ENCODE measurements at regions of chr1 and their contacts with region 1.

Region 1: DNA sequence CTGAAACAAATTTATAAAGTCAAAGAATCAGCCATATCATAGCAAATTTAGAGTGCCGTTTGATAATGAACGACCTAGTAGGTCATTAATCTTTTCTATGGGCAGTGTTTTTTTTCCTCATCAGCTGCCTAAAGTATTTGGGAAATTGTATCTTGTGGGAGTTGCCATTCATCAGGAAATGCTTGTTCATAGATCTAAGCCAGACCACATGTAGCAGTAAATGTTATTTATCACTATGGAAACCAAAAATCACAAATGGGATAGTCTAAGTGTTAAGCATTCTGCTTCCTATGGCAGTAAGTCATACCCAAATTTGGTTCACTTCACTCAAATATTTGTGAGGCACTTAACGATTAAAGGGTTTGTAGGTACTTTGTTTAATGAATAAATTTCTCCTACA is 52.9 kb downstream of the LRRC8D start:
- DNase-seq: no peak
- ATAC-seq: no peak
- H3K4me3 ChIP-seq: no peak overlapping the region
- H3K27ac ChIP-seq: peak overlapping the region in 3 of 4 donors; percentile 70 to 84 (median 83)
- H3K4me1 ChIP-seq: peaks cover 46 to 61% of the 10 kb centered on the region in 2 donors
- H3K27me3 ChIP-seq: no peaks in the 10 kb centered on the region
- CTCF ChIP-seq: no peak
- POLR2A ChIP-seq: no peak

Region 2: DNA sequence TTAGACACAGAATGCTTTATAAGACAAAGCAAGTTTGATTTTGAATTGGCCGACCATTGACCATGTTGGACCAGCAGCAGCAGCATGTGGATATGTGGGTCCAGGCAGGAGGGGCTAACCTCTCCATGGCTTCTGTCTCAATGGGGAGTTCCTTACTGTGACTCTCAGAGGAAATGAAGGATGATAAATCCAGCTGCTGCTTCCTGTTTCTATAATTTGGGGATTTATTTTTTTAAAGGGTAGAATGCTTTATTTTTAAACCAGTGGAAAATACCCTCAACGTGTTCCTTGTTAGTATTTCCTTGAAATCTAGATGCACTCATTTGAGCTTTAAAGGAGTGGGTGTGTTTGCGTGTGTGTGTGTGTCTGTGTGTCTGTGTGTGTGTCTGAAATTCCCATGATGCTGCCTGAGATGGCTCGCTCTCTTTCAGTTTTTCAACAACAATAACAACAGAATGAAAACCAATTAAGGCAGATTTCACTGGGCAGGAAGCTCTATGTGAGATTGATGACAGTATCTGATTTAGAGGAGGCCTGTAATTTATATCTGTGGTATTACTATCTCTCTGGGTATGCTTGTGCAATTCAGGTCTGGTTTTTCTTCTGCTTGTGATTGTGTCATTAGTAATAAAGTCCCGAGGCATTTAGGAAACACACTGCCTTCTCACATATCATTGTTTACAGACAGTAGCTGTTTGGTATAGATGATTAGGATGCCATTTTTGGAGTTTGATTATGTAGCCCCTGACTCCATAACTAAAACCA is 35.1 kb after region 1 on chr1:
- in situ Hi-C with region 1: no loop called
- intact Hi-C with region 1: loop called (anchors 2 kb)
- DNase-seq: peak in 1 of 2 donors; percentile 12
- ATAC-seq: peak; percentile 90 to 91
- H3K4me3 ChIP-seq: peak overlapping the region in 1 of 4 donors; percentile 16
- H3K27ac ChIP-seq: peak overlapping the region; percentile 69 to 83 (median 78)
- H3K4me1 ChIP-seq: peaks cover 66 to 77% of the 10 kb centered on the region in 2 donors
- H3K27me3 ChIP-seq: no peaks in the 10 kb centered on the region
- CTCF ChIP-seq: no peak
- POLR2A ChIP-seq: no peak